Posterior vena cava (tissue), 2 donors: ENCODE measurements at regions of chr1 and their contacts with region 1.

Region 1: DNA sequence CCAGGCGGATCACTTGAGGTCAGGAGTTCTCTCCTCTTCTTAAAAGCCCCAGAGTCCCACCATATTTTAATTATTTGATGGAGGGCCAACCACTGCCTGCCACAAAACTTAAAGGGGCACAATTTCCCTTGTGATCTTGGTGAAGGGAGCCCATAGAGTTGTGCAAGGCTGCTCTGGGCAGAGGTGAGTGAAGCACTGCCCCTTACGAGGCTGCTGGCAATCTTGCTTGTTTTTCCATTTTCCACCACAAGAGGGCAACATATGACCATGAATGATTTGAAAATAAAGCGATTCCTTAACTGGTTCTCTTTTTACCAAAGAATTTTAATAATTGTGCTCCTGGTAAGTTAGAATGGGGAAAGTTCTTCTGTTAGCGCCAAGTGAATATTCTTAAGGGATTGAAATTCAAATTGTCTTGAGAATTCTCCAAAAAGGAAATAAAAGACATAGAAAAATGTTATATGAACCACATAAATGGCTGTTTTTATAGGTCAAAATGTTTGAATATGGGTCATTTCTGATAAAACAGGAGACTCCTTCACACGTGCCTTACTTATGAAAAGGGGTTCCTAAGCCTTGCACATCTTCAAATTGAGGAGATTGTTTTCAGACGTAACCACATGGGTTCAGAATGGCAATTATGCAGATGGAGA is 22.7 kb downstream of the PGM1 start:
- DNase-seq: no peak

Region 2: DNA sequence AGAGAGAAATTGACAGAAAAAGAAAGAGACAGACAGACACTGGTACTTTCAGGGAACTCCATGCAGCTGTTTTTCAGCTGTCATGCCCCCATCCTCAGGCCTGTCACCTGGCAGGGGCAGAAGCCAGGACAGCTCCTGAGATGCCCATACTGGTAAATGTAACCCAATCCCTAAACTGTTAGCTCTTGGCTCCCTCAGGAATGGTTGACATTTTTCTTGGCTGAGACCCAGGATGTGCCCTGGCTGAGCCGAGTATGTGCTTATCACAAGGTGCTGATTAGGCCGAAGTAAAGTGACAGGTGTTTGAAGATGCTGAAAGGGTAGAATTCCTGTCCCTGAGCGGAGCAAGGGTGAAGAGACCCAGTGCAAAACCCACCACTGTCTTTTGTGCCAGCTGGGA is 28.0 kb after region 1 on chr1:
- intact Hi-C with region 1: no loop called
- DNase-seq: no peak

Region 3: DNA sequence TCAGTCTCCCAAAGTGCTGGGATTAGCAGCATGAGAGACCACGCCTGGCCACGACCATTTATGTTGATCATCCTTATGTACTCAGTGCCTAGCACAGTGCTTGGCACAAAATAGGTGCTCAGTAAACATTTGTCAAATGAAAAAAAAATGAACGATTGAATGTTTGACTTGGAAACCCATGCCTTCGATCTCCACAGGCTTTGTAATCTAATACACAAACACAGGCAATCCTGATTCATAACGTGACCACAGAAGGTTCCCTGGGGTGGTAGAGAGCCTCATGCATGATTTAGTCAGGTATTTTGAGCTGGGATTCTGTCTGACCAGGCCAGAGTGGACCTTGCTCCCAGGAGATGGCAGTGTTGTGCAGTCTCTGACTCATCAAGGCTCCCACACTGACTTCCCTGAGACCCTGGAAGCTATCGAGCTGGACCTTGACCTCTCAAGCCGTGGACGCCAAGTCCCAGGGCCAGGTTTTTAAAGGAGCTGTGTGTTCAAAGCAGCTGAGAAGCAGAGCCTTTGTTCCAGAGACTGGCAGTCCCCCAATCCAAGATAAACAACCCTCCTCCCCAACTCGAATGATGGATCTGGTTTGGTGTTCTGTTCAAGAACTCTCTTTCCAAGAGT is 58.5 kb after region 1 on chr1:
- intact Hi-C with region 1: loop called in 1 of 2 experiments (anchors 5 kb)
- DNase-seq: peak; percentile 85